CD8-positive, alpha-beta memory T cell (primary cell): ENCODE measurements at regions of chr13 and their contacts with region 1.

Region 1: GRCh38 chr13:51797664-51798488 is 6.1 kb downstream of the DHRS12 start:
- DNase-seq: peak; percentile 29 to 71 (median 49)
- H3K4me3 ChIP-seq: no peak overlapping the region
- H3K4me3 Mint-ChIP-seq: peak overlapping the region in 1 of 7 donors; percentile 58
- H3K27ac ChIP-seq: no peak overlapping the region
- H3K27ac Mint-ChIP-seq: peak overlapping the region in 7 of 8 donors; percentile 34 to 99 (median 86)
- H3K4me1 ChIP-seq: peaks cover 16% of the 10 kb centered on the region
- H3K4me1 Mint-ChIP-seq: peaks cover 17 to 40% (median 20%) of the 10 kb centered on the region in 3 donors
- H3K27me3 ChIP-seq: no peaks in the 10 kb centered on the region
- H3K27me3 Mint-ChIP-seq: no peaks in the 10 kb centered on the region

Region 2: DNA sequence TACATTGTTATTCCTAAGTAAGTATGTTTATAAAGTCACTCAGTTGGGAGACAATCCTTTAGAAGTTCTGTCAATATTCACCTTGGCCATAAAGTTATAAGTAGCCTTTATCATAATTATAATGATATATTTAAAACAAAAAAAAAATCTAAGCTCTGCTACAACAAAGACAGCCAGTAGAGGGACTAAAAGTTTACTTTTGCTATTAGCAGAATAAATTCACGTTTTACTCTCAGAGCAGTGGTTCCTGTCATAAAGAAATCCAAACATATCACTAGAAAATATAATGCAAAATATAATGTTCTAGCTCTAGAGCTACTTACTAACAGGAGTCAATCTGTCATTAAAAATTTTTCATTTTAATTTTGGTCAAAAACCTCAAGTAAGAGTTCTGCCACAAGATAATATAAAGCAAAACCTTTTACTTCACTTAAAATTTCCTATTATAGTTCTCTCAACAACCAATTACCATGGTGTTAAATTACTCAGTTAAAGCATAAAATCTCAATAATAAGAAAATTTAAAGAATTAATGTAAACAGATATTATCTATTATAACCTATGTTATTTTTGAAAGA is 362.8 kb before region 1 on chr13:
- CTCF ChIA-PET with region 1: interaction called, 19 read pairs
- POLR2A ChIA-PET with region 1: no interaction called
- DNase-seq: peak in 2 of 5 donors; percentile 24 to 37
- H3K4me3 ChIP-seq: no peak overlapping the region
- H3K4me3 Mint-ChIP-seq: no peak overlapping the region
- H3K27ac ChIP-seq: no peak overlapping the region
- H3K27ac Mint-ChIP-seq: peak overlapping the region in 1 of 8 donors; percentile 19
- H3K4me1 ChIP-seq: peaks cover 5% of the 10 kb centered on the region
- H3K4me1 Mint-ChIP-seq: peaks cover 17 to 43% (median 27%) of the 10 kb centered on the region in 3 donors
- H3K27me3 ChIP-seq: no peaks in the 10 kb centered on the region
- H3K27me3 Mint-ChIP-seq: no peaks in the 10 kb centered on the region

Region 3: GRCh38 chr13:51444922-51445321 is 353.0 kb before region 1 on chr13:
- CTCF ChIA-PET with region 1: interaction called, 12 read pairs
- POLR2A ChIA-PET with region 1: no interaction called
- DNase-seq: peak in 1 of 5 donors; percentile 11
- H3K4me3 ChIP-seq: no peak overlapping the region
- H3K4me3 Mint-ChIP-seq: no peak overlapping the region
- H3K27ac ChIP-seq: no peak overlapping the region
- H3K27ac Mint-ChIP-seq: no peak overlapping the region
- H3K4me1 ChIP-seq: peaks cover 10% of the 10 kb centered on the region
- H3K4me1 Mint-ChIP-seq: peaks cover 19 to 41% (median 41%) of the 10 kb centered on the region in 3 donors
- H3K27me3 ChIP-seq: no peaks in the 10 kb centered on the region
- H3K27me3 Mint-ChIP-seq: no peaks in the 10 kb centered on the region

Region 4: DNA sequence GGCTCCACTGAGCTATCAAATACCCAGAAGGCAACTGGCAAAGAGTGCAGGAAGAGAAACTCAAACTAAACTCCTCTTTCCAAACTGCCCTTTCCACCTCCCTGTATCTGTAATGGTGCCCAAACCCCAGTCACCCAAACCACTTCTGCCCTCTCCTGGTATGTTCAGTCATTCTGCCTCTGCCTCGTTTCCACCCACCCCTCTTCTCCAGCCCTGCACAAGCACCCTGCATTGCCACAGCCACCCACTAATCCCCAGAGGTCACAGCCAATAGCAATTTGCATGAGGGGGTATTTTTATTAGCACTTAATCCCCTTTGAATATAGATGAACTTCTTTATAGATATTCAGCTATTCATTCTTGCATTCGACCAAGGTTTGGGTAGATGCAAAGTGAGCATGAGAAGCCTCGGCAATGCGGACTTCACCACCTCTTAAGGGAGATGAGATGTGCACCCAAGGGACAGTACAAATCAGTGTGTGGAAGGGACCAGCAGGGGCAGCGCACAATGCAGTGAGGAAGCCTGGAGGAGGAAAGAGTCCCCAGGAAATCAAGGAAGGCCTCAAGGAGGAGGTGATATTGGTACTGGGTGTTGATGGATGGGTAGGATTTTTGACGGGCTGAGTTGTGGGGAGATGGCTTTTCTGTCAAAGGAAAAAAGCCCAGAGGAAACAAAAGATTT is 34.7 kb after region 1 on chr13:
- CTCF ChIA-PET with region 1: interaction called, 14 read pairs
- POLR2A ChIA-PET with region 1: no interaction called
- DNase-seq: peak; percentile 26 to 75 (median 60)
- H3K4me3 ChIP-seq: no peak overlapping the region
- H3K4me3 Mint-ChIP-seq: peak overlapping the region in 1 of 7 donors; percentile 24
- H3K27ac ChIP-seq: no peak overlapping the region
- H3K27ac Mint-ChIP-seq: peak overlapping the region in 5 of 8 donors; percentile 0 to 74 (median 38)
- H3K4me1 ChIP-seq: peaks cover 36% of the 10 kb centered on the region
- H3K4me1 Mint-ChIP-seq: peaks cover 17 to 39% (median 32%) of the 10 kb centered on the region in 3 donors
- H3K27me3 ChIP-seq: no peaks in the 10 kb centered on the region
- H3K27me3 Mint-ChIP-seq: no peaks in the 10 kb centered on the region